ENCODE measurements at regions of chr17 and their contacts with region 1.

Region 1: DNA sequence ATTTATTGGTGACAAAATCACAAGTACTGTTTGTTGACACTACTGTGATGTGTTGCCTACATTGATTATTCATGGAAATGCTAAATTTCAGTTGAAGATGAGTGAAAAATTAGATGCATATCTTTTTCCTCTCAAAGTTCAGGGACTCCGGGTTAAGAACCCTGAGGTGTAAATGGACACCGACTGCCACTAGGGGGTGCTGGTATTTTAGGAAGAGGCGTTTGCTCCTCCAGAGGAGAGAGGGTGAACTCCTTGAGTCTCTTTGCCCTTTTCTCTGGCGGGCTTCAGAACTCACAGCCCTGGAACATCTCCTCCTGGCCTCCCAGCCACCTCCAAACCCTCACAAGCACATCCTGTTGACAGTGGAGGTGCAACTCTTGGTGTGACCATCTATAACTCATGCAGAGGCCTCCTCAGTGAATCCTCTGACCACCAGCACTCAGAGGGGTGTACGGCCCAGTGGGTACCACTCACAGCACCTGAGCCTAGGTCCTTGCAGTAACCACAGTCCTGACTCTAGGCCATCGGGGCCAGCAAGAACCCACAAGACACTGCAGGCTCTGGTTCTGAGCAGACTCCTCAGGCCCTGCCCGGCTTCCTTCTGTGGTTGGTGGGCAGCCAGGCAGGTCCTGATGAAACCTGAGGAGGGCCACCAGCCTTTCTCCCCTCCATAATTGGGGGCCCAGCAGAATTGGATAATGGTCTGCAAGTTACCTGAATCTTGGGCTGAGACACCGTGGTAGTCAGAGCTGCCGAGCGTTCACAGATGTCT is 26.2 kb upstream of the PIK3R5 start:
- DNase-seq: peak; percentile 25 to 69
- ATAC-seq: peak in 7 of 8 donors; percentile 46 to 75 (median 69)
- H3K4me3 ChIP-seq: no peak overlapping the region
- H3K27ac ChIP-seq: no peak overlapping the region
- H3K4me1 ChIP-seq: no peaks in the 10 kb centered on the region
- H3K27me3 ChIP-seq: peaks cover 0 to 19% (median 3%) of the 10 kb centered on the region in 7 donors
- CTCF ChIP-seq: peak; percentile 52 to 87 (median 79)

Region 2: GRCh38 chr17:9050801-9051401 is 59.2 kb after region 1 on chr17:
- intact Hi-C with region 1: no loop called
- DNase-seq: no peak
- ATAC-seq: no peak
- H3K4me3 ChIP-seq: no peak overlapping the region
- H3K27ac ChIP-seq: no peak overlapping the region
- H3K4me1 ChIP-seq: no peaks in the 10 kb centered on the region
- H3K27me3 ChIP-seq: no peaks in the 10 kb centered on the region
- CTCF ChIP-seq: no peak

Region 3: GRCh38 chr17:9522074-9522473 is 530.4 kb after region 1 on chr17:
- intact Hi-C with region 1: loop called (anchors 2 to 5 kb)
- DNase-seq: peak in 1 of 2 donors; percentile 23
- ATAC-seq: peak in 6 of 8 donors; percentile 64 to 76 (median 72)
- H3K4me3 ChIP-seq: no peak overlapping the region
- H3K27ac ChIP-seq: no peak overlapping the region
- H3K4me1 ChIP-seq: peaks cover 0 to 22% (median 6%) of the 10 kb centered on the region in 9 donors
- H3K27me3 ChIP-seq: no peaks in the 10 kb centered on the region
- CTCF ChIP-seq: peak in 7 of 9 donors; percentile 35 to 68 (median 62)

Region 4: GRCh38 chr17:9529033-9529700 is 537.5 kb after region 1 on chr17:
- intact Hi-C with region 1: loop called in 7 of 10 experiments (anchors 2 to 5 kb)
- DNase-seq: no peak
- ATAC-seq: peak in 1 of 8 donors; percentile 64
- H3K4me3 ChIP-seq: no peak overlapping the region
- H3K27ac ChIP-seq: no peak overlapping the region
- H3K4me1 ChIP-seq: no peaks in the 10 kb centered on the region
- H3K27me3 ChIP-seq: no peaks in the 10 kb centered on the region
- CTCF ChIP-seq: peak in 7 of 9 donors; percentile 23 to 62 (median 46)

Measured in heart right ventricle (tissue), 16 donors.